ENCODE measurements at regions of chr3 and their contacts with region 1.

Region 1: GRCh38 chr3:8769088-8769822 is at the start of gene OXTR:
- DNase-seq: peak; percentile 69
- H3K4me3 ChIP-seq: peak within 1 kb of the TSS; percentile 66
- H3K27ac ChIP-seq: peak within 1 kb of the TSS; percentile 57
- H3K27me3 ChIP-seq: no peaks in the 10 kb centered on the region
- CTCF ChIP-seq: peak; percentile 98
- polyA plus RNA-seq, gene OXTR: 57.2 and 58.7 TPM in 2 replicates

Region 2: DNA sequence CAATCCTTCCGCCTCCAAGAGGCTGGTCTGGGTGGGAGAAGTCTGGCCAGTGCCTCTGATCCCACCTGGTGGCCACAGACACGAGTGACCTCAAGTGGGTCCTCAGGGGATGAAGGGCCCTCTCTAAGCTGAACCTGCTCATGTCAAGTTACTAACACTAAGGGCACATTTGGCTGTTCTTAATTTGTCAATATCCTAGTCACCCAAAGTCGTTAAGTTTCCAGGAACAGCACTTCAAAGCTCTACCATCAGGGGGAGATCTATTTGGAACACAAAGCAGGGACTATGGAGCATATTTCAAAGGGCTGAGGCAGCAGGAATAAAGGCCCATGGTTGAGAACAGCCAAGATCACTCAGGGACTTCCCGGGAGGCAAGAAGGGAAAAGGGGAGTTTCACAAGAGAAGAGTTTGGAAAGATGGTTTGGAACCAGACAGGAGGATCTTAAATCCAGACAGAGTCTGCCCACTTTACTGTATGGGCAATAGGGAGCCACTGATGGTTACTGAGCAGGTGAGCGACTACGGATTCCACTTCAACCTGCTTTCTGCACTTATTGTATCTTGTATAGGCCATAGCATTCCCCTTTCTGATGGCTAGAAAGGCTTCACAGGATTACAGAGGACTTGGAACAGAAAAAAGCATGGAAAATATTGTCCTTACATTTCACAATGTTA is 13.6 kb before region 1 on chr3:
- CTCF ChIA-PET with region 1: interaction called, 28 read pairs
- POLR2A ChIA-PET with region 1: no interaction called
- DNase-seq: no peak
- H3K4me3 ChIP-seq: no peak overlapping the region
- H3K27ac ChIP-seq: no peak overlapping the region
- H3K27me3 ChIP-seq: no peaks in the 10 kb centered on the region
- CTCF ChIP-seq: peak; percentile 40; the same call in 1 of the 2 replicates

Region 3: GRCh38 chr3:8869613-8870012 is 100.4 kb after region 1 on chr3:
- CTCF ChIA-PET with region 1: interaction called, 20 read pairs
- POLR2A ChIA-PET with region 1: no interaction called
- DNase-seq: peak; percentile 95
- H3K4me3 ChIP-seq: no peak overlapping the region
- H3K27ac ChIP-seq: peak overlapping the region; percentile 94
- H3K27me3 ChIP-seq: no peaks in the 10 kb centered on the region
- CTCF ChIP-seq: no peak

Region 4: DNA sequence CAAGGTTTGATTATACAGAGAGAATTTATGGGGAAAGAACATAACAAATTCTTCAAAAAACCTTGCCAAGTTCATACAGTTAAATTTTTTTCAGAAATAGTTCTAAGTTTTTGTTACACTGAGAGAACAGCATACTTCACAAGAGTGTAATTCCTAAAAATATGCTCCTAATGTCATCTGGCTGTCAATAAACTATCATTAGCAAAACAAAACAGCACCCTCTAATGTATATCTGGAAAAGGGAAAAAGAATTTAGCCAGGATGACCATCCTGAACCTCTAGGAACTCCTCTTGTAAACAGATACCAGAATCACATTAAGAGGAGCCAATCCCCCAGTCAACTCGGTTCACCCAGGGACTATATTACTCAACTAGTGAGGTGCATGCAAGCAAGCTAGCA is 130.7 kb after region 1 on chr3:
- CTCF ChIA-PET with region 1: interaction called, 17 read pairs
- POLR2A ChIA-PET with region 1: interaction called, 3 read pairs
- DNase-seq: peak; percentile 29
- H3K4me3 ChIP-seq: no peak overlapping the region
- H3K27ac ChIP-seq: no peak overlapping the region
- H3K27me3 ChIP-seq: no peaks in the 10 kb centered on the region
- CTCF ChIP-seq: 0 out of 2 replicates have a peak, but pooled peaks have one; percentile 22

Region 5: DNA sequence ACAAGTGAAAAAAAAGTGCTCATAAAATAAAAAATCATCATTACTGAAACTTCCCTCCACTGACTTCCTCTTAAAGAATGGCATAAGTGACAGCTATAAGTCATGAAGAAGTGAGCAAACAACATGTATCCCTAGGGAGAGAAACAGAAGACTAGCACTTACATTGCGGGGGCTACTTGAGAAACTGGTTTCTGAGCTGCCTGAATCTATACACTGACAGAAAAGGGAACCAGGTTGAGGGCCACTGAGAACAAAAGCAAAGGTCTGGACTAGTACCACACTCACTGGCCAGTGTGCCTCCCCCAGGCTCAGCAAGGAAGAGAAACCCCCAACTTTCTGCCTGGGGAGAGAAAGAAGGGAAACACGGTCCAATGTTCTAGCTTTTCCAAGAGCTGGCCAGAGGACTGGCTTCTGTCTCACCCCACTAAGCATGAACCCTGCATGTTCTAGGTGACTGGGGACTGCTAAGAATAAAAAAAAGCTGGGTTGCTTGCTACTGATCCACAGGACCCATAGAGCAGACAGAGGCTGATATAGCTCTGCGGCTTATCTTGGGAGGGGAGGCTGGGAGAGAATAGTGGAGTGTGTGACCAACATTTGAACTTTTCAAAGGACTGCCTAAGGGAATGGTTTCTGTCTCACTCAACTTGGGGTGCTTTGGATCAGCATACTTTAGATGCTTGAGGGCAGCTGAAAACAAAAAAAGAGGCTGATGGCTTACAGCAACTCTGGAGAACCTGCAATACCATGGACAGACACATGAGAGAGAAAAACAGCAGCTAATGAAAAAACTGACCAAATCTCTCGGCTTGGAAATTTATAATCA is 185.9 kb after region 1 on chr3:
- CTCF ChIA-PET with region 1: interaction called, 23 read pairs
- POLR2A ChIA-PET with region 1: interaction called, 4 read pairs
- DNase-seq: no peak
- H3K4me3 ChIP-seq: no peak overlapping the region
- H3K27ac ChIP-seq: no peak overlapping the region
- H3K27me3 ChIP-seq: no peaks in the 10 kb centered on the region
- CTCF ChIP-seq: peak; percentile 35; the same call in 1 of the 2 replicates

Region 6: GRCh38 chr3:9302425-9303181 is 533.3 kb after region 1 on chr3:
- CTCF ChIA-PET with region 1: interaction called, 18 read pairs
- POLR2A ChIA-PET with region 1: no interaction called
- DNase-seq: peak; percentile 54
- H3K4me3 ChIP-seq: peak overlapping the region; percentile 27
- H3K27ac ChIP-seq: no peak overlapping the region
- H3K27me3 ChIP-seq: peaks cover 5% of the 10 kb centered on the region
- CTCF ChIP-seq: peak; percentile 91